Dorsolateral prefrontal cortex (tissue), 120 donors: ENCODE measurements at regions of chr7 and their contacts with region 1.

Region 1: DNA sequence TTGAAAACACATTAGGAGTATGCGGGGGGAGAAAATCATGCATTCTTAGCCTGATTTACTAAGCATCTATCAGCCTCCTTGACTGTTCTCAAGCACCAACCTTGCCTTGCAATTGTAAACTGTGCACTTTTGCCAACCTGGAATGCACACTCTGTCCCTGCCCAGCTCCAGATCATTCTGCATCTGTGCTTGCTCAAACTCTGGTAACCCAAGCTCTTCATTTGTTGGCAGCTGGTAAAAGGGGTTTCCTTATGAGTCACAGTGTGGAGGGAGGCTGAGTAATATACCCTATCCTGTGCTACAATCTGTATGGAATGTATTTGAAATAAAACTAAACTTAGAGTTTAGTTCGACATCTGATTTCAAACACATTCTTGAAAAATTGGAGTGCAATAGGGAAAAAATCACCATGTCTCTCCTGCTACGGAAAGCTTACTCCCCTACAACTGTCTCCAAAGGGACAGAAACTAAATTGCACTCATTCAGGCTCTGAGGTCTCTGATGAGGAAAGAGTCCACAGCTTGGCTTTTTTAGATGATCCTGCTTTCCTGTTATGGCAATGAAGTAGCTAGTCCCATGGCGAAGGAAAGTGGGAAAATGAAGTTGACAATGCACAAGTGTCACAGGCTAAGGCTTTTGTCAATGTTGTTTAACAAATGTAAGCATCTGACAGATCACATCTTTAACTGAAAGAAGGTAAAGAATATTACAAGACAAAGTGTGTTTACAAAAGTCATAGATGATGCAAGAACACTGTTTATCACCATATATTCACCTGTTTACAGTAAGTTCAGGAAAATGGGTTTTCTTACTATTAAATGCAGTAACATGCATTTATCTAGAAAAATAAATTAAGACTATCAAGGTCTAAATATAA is 61.9 kb downstream of the TES start:
- DNase-seq: peak in 2 of 10 donors; percentile 11 to 46
- H3K4me3 ChIP-seq: no peak overlapping the region
- H3K27ac ChIP-seq: no peak overlapping the region
- H3K27me3 ChIP-seq: peaks cover 0 to 3% (median 0%) of the 10 kb centered on the region in 45 donors
- CTCF ChIP-seq: no peak

Region 2: GRCh38 chr7:116311816-116312471 is 39.7 kb after region 1 on chr7:
- intact Hi-C with region 1: loop called in 1 of 2 experiments (anchors 5 kb)
- DNase-seq: no peak
- H3K4me3 ChIP-seq: no peak overlapping the region
- H3K27ac ChIP-seq: no peak overlapping the region
- H3K27me3 ChIP-seq: no peaks in the 10 kb centered on the region
- CTCF ChIP-seq: no peak